ENCODE measurements at regions of chr1 and their contacts with region 1.

Region 1: DNA sequence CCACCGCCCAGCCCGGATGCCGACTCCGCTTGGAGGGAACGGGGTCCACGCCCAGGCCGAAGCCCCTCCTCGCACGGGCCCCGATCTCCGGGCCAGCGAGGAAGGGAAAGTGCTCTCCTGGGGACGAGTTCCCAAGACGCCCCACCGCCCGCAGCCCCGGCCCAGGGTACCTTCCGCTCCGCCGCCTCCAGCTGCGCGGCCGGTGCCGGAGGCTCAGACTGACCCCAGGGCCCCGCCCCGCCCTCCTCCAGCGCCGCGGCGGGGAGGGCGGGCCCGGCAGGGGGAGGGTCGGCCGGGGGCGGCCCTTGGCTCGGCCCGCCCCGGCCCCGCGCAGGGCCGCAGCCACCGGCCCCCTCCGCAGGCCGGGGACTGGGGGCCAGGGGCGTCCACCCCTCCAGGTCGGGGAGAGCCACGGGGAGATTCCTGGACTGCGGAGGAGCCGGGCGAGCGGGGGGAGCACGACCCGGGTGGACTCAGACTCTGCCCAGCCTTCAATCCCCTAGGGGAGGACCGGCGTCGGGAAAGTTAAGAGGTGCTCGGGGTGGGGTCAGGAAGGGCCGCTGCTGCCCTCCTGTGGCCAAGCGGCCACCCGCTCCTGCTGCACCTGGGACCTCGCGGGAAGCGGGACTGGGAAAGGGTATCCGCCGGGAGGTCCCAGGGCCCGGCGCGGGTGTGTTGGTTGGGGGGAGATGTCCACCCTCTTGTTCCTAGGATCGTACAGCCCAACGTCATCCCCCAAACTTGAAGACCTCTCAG is at the start of gene RHOC:
- H3K4me3 Mint-ChIP-seq: peak within 1 kb of the TSS; percentile 76
- H3K27ac Mint-ChIP-seq: peak within 1 kb of the TSS; percentile 64
- H3K4me1 Mint-ChIP-seq: peaks cover 55% of the 10 kb centered on the region
- H3K27me3 Mint-ChIP-seq: peaks cover 56% of the 10 kb centered on the region

Region 2: GRCh38 chr1:112501810-112502641 is 205.1 kb before region 1 on chr1:
- intact Hi-C with region 1: loop called (anchors 5 kb)
- H3K4me3 Mint-ChIP-seq: peak overlapping the region; percentile 58
- H3K27ac Mint-ChIP-seq: no peak overlapping the region
- H3K4me1 Mint-ChIP-seq: peaks cover 5% of the 10 kb centered on the region
- H3K27me3 Mint-ChIP-seq: peaks cover 75% of the 10 kb centered on the region

Region 3: DNA sequence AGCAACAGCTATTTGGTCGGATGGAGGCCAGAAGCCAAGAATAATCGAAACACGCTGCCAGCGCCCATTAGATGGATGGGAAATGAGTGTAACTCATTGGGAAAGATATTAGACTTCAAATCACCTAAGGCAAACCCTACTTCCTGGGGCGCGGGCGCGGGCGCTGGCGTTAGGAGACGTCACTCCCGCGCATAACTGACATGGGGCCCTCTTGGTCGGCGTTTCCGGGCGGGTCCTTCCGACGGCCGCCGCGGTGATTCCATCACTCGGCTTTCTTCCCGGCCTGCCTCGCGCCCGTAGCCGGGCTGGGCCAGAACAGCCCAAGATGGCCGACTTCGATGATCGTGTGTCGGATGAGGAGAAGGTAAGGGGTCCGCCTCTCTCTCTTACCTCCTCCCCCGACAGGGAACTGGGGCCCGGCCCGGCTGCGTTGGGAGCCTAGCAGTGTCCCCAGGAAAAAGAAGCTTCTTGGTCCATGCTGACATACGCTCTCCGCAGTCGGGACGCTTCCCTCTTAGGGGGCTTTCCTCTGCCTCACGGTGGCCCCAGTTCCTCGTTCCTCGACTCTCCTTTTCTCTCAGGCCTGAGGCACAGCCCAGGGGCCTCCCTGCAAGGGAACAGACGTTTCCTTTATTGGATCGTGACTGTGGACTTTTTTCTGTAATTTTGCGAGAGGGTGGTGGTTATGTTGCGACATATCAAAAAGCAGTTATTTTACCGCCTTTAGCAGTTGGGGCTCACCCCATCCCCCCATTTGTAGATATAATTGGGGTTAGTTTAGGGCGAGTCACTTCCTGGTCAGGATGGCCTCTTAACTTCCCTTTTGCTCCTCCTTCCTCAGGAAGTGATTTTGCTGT is 87.3 kb before region 1 on chr1 and contains the start of gene CAPZA1:
- intact Hi-C with region 1: loop called (anchors 5 kb)
- H3K4me3 Mint-ChIP-seq: peak within 1 kb of the TSS; percentile 97
- H3K27ac Mint-ChIP-seq: peak within 1 kb of the TSS; percentile 99
- H3K4me1 Mint-ChIP-seq: peaks cover 29% of the 10 kb centered on the region
- H3K27me3 Mint-ChIP-seq: no peaks in the 10 kb centered on the region

Region 4: DNA sequence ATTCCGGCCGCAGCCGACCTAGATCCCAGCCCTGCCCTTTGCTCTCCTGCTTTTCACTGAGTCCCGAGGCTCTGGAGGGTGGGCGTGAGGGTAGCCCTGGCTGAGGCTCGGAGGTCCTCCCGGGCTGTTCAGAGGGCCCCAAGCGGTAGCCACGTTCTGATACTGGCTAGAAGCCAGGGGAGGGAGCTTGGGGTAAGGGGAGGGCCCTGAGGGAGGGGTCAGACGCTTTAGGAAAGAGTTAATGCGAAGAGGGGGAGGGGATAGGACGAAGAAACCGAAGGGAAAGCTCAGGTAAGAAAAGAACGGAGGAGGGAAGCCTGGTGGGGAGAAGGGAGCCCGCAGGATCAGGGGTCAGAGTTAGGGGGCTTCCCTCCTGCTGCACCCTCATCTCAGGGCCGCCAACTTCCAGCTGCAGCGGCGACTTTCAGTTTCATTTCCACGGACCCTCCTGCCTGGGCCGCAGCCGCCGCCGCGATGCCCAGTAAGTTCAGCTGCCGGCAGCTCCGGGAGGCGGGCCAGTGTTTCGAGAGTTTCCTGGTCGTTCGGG is 32.6 kb before region 1 on chr1 and contains the start of gene MOV10:
- intact Hi-C with region 1: loop called (anchors 2 kb)
- H3K4me3 Mint-ChIP-seq: peak within 1 kb of the TSS; percentile 100
- H3K27ac Mint-ChIP-seq: peak within 1 kb of the TSS; percentile 100
- H3K4me1 Mint-ChIP-seq: peaks cover 34% of the 10 kb centered on the region
- H3K27me3 Mint-ChIP-seq: peaks cover 9% of the 10 kb centered on the region